Posterior cingulate gyrus (tissue), 11 donors: ENCODE measurements at regions of chr12 and their contacts with region 1.

Region 1: GRCh38 chr12:54368709-54369583 is 4.7 kb upstream of the GPR84 start:
- DNase-seq: peak; percentile 81 to 98 (median 93)

Region 2: DNA sequence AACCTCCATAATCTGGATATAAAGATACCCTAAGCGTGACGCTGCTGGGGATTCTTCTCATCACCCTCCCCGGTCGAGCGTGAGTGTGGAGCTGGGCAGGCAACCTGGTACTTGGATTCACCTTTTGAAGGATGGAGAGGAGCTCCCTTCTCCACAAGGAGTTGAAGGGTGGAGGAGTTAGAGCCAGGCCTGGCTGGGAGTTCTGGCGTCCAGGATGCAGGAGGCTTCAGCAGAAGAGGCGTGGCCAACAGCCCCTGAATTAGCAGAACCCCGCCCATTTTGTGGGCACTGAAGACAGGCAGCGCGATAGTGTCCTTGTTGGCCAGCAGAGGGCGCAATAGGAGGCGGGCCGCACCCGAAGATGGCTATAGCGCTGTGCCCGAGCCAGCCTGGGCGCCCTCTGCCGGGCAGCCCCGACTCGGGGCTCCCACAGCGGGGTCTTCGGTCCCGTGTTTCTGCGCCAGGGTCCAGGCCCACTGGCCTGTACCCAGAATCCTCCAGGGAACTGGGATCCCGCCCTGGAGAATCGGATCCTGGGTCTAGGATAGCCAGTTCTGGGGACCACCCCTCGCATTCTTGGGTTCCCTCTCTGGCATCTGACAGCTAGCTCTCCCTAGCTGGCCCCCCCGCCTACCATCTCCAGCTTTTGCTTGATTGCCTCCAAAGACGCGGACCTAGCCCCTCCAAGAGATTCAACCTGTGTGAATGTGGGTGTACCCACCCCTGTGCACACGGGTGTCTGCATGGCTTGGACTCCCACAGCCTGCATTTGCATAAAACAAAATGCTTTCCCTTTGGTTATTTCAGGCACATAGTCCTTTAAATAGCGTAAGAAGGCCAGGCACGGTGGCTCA is 154.2 kb before region 1 on chr12:
- intact Hi-C with region 1: loop called (anchors 2 kb)
- DNase-seq: peak; percentile 71 to 98 (median 86)

Region 3: GRCh38 chr12:54294152-54294952 is 74.6 kb before region 1 on chr12:
- intact Hi-C with region 1: loop called (anchors 5 kb)
- DNase-seq: peak in 8 of 10 donors; percentile 32 to 93 (median 64)

Region 4: GRCh38 chr12:54379401-54380201 is 10.7 kb after region 1 on chr12:
- intact Hi-C with region 1: loop called (anchors 1 kb)
- DNase-seq: peak; percentile 78 to 98 (median 93)